CD4-positive, alpha-beta memory T cell (primary cell): ENCODE measurements at regions of chr3 and their contacts with region 1.

Region 1: GRCh38 chr3:48439820-48440589 is at the starts of genes CCDC51 and TMA7:
- DNase-seq: peak; percentile 96 to 99 (median 97)
- H3K4me3 ChIP-seq: peak within 1 kb of the TSS; percentile 93 to 95
- H3K4me3 Mint-ChIP-seq: peak within 1 kb of the TSS; percentile 86 to 99 (median 93)
- H3K27ac ChIP-seq: peak within 1 kb of the TSS; percentile 86
- H3K27ac Mint-ChIP-seq: peak within 1 kb of the TSS; percentile 91 to 100 (median 99)
- H3K4me1 ChIP-seq: peaks cover 32% of the 10 kb centered on the region
- H3K4me1 Mint-ChIP-seq: peaks cover 16 to 40% (median 32%) of the 10 kb centered on the region in 4 donors
- H3K27me3 ChIP-seq: no peaks in the 10 kb centered on the region
- H3K27me3 Mint-ChIP-seq: no peaks in the 10 kb centered on the region
- total RNA-seq, gene CCDC51: 5.1 to 5.4 TPM
- total RNA-seq, gene TMA7: 309 to 310 TPM

Region 2: DNA sequence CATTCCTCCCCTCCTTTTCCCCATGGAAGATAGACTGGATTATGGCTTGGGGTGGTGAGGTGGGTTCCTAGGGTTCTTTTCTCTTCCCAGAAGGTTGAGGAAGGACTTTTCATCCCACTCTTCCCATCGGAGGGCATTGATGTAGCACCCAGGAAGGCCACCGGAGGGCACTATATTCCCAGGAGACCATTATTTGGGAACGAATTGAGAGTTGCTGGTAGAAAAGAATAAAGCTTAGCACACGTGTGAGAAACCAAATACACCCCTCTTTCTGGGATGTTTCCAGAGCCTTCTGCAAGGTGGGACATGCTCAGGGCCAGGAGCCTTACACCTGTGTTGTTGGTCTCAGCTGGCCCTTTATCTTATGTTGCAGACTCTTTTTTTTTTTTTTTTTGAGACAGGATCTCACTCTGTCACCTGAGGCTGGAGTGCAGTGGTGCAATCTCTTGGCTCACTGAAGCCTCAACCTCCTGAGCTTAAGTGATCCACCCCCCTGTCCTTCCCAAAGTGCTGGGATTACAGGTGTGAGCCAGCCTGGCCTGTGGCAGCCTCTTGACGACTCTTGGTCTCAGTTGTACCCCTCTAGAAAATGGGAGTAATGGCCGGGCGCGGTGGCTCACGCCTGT is 245.4 kb before region 1 on chr3:
- CTCF ChIA-PET with region 1: interaction called, 18 read pairs
- POLR2A ChIA-PET with region 1: no interaction called
- intact Hi-C with region 1: no loop called
- DNase-seq: peak in 3 of 5 donors; percentile 5 to 9 (median 9)
- H3K4me3 ChIP-seq: no peak overlapping the region
- H3K4me3 Mint-ChIP-seq: no peak overlapping the region
- H3K27ac ChIP-seq: no peak overlapping the region
- H3K27ac Mint-ChIP-seq: no peak overlapping the region
- H3K4me1 ChIP-seq: no peaks in the 10 kb centered on the region
- H3K4me1 Mint-ChIP-seq: no peaks in the 10 kb centered on the region
- H3K27me3 ChIP-seq: no peaks in the 10 kb centered on the region
- H3K27me3 Mint-ChIP-seq: peaks cover 0 to 2% of the 10 kb centered on the region in 2 donors

Region 3: GRCh38 chr3:48273594-48274211 is 166.3 kb before region 1 on chr3:
- CTCF ChIA-PET with region 1: interaction called, 53 read pairs
- POLR2A ChIA-PET with region 1: interaction called, 11 read pairs
- intact Hi-C with region 1: no loop called
- DNase-seq: peak; percentile 51 to 66 (median 60)
- H3K4me3 ChIP-seq: no peak overlapping the region
- H3K4me3 Mint-ChIP-seq: no peak overlapping the region
- H3K27ac ChIP-seq: no peak overlapping the region
- H3K27ac Mint-ChIP-seq: peak overlapping the region in 2 of 7 donors; percentile 12 to 74
- H3K4me1 ChIP-seq: peaks cover 15% of the 10 kb centered on the region
- H3K4me1 Mint-ChIP-seq: peaks cover 14 to 27% (median 21%) of the 10 kb centered on the region in 4 donors
- H3K27me3 ChIP-seq: no peaks in the 10 kb centered on the region
- H3K27me3 Mint-ChIP-seq: no peaks in the 10 kb centered on the region

Region 4: DNA sequence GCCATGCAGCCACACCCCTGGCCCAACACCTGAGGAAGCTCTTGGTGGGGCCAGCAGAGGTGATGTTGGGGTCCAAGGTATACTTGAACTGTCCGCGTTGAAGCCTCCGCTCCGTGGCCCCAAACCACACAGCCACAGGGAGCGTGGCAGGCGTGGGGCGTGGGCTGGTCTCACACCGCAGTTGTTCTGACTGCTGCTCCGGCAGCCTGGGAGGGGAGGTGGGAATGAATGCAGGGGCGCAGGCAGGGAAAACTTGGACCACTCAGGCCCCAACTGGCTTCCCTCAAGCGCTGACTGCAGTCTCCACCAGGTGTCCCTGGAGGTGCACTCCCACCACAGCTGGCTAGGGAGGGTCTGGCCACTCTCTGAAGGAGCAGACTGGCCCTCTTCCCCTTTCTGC is 24.5 kb before region 1 on chr3:
- CTCF ChIA-PET with region 1: interaction called, 381 read pairs
- POLR2A ChIA-PET with region 1: no interaction called
- intact Hi-C with region 1: no loop called
- DNase-seq: no peak
- H3K4me3 ChIP-seq: no peak overlapping the region
- H3K4me3 Mint-ChIP-seq: no peak overlapping the region
- H3K27ac ChIP-seq: no peak overlapping the region
- H3K27ac Mint-ChIP-seq: no peak overlapping the region
- H3K4me1 ChIP-seq: no peaks in the 10 kb centered on the region
- H3K4me1 Mint-ChIP-seq: no peaks in the 10 kb centered on the region
- H3K27me3 ChIP-seq: no peaks in the 10 kb centered on the region
- H3K27me3 Mint-ChIP-seq: no peaks in the 10 kb centered on the region

Region 5: GRCh38 chr3:48472915-48473616 is 33.1 kb after region 1 on chr3:
- CTCF ChIA-PET with region 1: interaction called, 83 read pairs
- POLR2A ChIA-PET with region 1: interaction called, 56 read pairs
- intact Hi-C with region 1: loop called (anchors 1 kb)
- DNase-seq: peak; percentile 93 to 98 (median 96)
- H3K4me3 ChIP-seq: peak overlapping the region; percentile 93 to 95
- H3K4me3 Mint-ChIP-seq: peak overlapping the region; percentile 84 to 99 (median 95)
- H3K27ac ChIP-seq: peak overlapping the region; percentile 97
- H3K27ac Mint-ChIP-seq: peak overlapping the region; percentile 92 to 100 (median 99)
- H3K4me1 ChIP-seq: peaks cover 86% of the 10 kb centered on the region
- H3K4me1 Mint-ChIP-seq: peaks cover 34 to 75% (median 54%) of the 10 kb centered on the region in 4 donors
- H3K27me3 ChIP-seq: no peaks in the 10 kb centered on the region
- H3K27me3 Mint-ChIP-seq: no peaks in the 10 kb centered on the region

Region 6: GRCh38 chr3:48514436-48515227 is 74.6 kb after region 1 on chr3:
- CTCF ChIA-PET with region 1: interaction called, 215 read pairs
- POLR2A ChIA-PET with region 1: interaction called, 5 read pairs
- intact Hi-C with region 1: no loop called
- DNase-seq: peak; percentile 56 to 65 (median 62)
- H3K4me3 ChIP-seq: no peak overlapping the region
- H3K4me3 Mint-ChIP-seq: peak overlapping the region; percentile 52 to 81 (median 72)
- H3K27ac ChIP-seq: peak overlapping the region; percentile 31
- H3K27ac Mint-ChIP-seq: peak overlapping the region in 6 of 7 donors; percentile 43 to 86 (median 67)
- H3K4me1 ChIP-seq: peaks cover 75% of the 10 kb centered on the region
- H3K4me1 Mint-ChIP-seq: peaks cover 49 to 82% (median 68%) of the 10 kb centered on the region in 4 donors
- H3K27me3 ChIP-seq: no peaks in the 10 kb centered on the region
- H3K27me3 Mint-ChIP-seq: no peaks in the 10 kb centered on the region

Region 7: GRCh38 chr3:49302613-49303012 is 862.6 kb after region 1 on chr3:
- CTCF ChIA-PET with region 1: no interaction called
- POLR2A ChIA-PET with region 1: no interaction called
- intact Hi-C with region 1: no loop called
- DNase-seq: no peak
- H3K4me3 ChIP-seq: no peak overlapping the region
- H3K4me3 Mint-ChIP-seq: no peak overlapping the region
- H3K27ac ChIP-seq: no peak overlapping the region
- H3K27ac Mint-ChIP-seq: peak overlapping the region in 5 of 7 donors; percentile 13 to 85 (median 43)
- H3K4me1 ChIP-seq: peaks cover 4% of the 10 kb centered on the region
- H3K4me1 Mint-ChIP-seq: peaks cover 0 to 7% (median 0%) of the 10 kb centered on the region in 4 donors
- H3K27me3 ChIP-seq: no peaks in the 10 kb centered on the region
- H3K27me3 Mint-ChIP-seq: no peaks in the 10 kb centered on the region